BJ (cell line): ENCODE measurements at regions of chr2 and their contacts with region 1.

Region 1: GRCh38 chr2:172131713-172132555 is 29.2 kb upstream of the DLX2 start:
- DNase-seq: no peak
- H3K4me3 ChIP-seq: no peak overlapping the region
- H3K27me3 ChIP-seq: no peaks in the 10 kb centered on the region
- CTCF ChIP-seq: no peak

Region 2: DNA sequence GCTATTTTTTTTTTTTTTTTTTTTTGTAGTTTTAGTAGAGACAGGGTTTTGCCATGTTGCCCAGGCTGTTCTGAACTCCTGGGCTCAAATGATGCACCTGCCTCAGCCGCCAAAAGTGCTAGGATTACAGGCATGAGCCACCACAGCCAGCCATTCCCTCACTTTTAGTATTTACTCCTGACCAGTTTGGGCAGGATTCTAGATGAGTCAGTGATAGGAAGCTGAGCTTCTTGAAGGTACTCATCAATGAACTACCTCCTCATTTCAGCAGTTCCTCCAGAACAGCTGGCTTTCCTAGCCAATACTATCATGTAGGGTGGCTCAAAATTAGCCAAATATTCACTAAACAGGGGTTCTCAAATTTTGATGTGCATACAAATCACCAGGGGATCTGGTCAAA is 552.5 kb before region 1 on chr2:
- CTCF ChIA-PET with region 1: no interaction called
- POLR2A ChIA-PET with region 1: interaction called, 20 read pairs
- DNase-seq: no peak
- H3K4me3 ChIP-seq: no peak overlapping the region
- H3K27me3 ChIP-seq: no peaks in the 10 kb centered on the region
- CTCF ChIP-seq: no peak

Region 3: DNA sequence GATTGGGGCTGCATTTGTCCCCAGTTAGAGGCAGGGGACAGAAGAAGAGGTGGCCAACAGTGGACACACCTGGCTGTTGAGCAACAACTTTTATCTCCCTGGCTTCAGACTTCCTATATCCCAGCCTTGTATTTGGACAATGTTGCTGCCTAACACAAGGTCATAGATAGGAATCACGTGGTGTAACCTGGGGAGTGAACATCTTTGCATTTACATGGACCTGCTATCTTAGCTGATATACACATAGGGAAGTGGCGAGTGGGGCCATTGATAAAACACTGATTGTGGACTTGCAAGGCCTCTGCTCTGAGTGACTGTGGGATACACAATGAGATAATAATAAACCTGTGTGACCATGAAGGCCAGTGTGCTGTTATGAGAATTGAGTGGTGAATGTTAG is 630.6 kb after region 1 on chr2:
- CTCF ChIA-PET with region 1: no interaction called
- POLR2A ChIA-PET with region 1: no interaction called
- DNase-seq: no peak
- H3K4me3 ChIP-seq: no peak overlapping the region
- H3K27me3 ChIP-seq: peaks cover 1% of the 10 kb centered on the region; the same call in 1 of the 2 replicates
- CTCF ChIP-seq: no peak